Pancreas (tissue), 10 donors: ENCODE measurements at regions of chr2 and their contacts with region 1.

Region 1: DNA sequence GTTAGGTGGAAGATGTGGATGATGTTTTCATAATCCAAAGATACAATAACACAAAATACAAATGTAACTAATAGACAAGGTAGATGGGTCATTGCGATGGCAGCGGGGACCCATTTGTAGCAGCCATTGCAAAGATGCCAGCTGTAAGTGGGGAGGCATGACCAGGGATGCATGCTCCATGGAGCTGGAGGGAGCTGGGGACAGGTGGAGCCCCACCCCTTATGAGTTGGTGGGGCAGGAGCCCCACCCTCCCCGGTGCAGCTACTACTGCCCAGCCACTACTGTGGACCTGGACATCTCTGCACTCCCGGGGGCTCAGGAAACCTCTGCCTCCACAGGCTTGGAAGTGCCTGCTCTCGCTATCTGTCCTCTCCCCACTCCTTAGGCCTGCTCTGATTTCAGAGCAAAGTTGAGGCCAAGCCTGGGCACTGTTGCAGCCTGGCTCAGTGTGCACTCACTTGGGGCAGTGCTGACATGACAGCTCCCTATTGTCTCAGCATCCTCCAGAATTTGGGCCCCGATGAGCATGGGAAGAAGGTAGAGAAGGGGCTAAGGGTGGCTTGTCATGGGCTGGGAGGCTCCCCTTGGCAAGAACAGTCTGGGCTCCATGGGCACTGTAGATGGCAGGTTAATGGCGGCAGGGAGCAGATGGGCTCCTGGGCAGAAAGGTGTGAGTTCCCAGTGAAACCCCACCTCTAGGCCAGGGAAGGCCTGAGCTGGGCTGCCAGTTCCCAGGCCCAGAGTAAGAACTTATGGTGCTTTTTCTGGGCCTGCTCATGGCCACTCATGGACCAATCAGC is 81.1 kb downstream of the ZNF804A start:
- DNase-seq: no peak
- ATAC-seq: no peak
- H3K4me3 ChIP-seq: no peak overlapping the region
- H3K27ac ChIP-seq: no peak overlapping the region
- H3K4me1 ChIP-seq: no peaks in the 10 kb centered on the region
- H3K27me3 ChIP-seq: no peaks in the 10 kb centered on the region
- CTCF ChIP-seq: no peak

Region 2: GRCh38 chr2:184078496-184078895 is 600.9 kb before region 1 on chr2:
- intact Hi-C with region 1: no loop called
- DNase-seq: no peak
- ATAC-seq: no peak
- H3K4me3 ChIP-seq: no peak overlapping the region
- H3K27ac ChIP-seq: no peak overlapping the region
- H3K4me1 ChIP-seq: no peaks in the 10 kb centered on the region
- H3K27me3 ChIP-seq: no peaks in the 10 kb centered on the region
- CTCF ChIP-seq: no peak

Region 3: GRCh38 chr2:184780944-184781343 is 101.5 kb after region 1 on chr2:
- intact Hi-C with region 1: loop called in 1 of 3 experiments (anchors 1 kb)
- DNase-seq: no peak
- ATAC-seq: no peak
- H3K4me3 ChIP-seq: no peak overlapping the region
- H3K27ac ChIP-seq: no peak overlapping the region
- H3K4me1 ChIP-seq: no peaks in the 10 kb centered on the region
- H3K27me3 ChIP-seq: no peaks in the 10 kb centered on the region
- CTCF ChIP-seq: no peak

Region 4: GRCh38 chr2:184860744-184861143 is 181.3 kb after region 1 on chr2:
- intact Hi-C with region 1: no loop called
- DNase-seq: peak in 1 of 6 donors; percentile 10
- ATAC-seq: no peak
- H3K4me3 ChIP-seq: no peak overlapping the region
- H3K27ac ChIP-seq: no peak overlapping the region
- H3K4me1 ChIP-seq: no peaks in the 10 kb centered on the region
- H3K27me3 ChIP-seq: no peaks in the 10 kb centered on the region
- CTCF ChIP-seq: no peak